Endothelial cell of umbilical vein (primary cell): ENCODE measurements at regions of chr10 and their contacts with region 1.

Region 1: DNA sequence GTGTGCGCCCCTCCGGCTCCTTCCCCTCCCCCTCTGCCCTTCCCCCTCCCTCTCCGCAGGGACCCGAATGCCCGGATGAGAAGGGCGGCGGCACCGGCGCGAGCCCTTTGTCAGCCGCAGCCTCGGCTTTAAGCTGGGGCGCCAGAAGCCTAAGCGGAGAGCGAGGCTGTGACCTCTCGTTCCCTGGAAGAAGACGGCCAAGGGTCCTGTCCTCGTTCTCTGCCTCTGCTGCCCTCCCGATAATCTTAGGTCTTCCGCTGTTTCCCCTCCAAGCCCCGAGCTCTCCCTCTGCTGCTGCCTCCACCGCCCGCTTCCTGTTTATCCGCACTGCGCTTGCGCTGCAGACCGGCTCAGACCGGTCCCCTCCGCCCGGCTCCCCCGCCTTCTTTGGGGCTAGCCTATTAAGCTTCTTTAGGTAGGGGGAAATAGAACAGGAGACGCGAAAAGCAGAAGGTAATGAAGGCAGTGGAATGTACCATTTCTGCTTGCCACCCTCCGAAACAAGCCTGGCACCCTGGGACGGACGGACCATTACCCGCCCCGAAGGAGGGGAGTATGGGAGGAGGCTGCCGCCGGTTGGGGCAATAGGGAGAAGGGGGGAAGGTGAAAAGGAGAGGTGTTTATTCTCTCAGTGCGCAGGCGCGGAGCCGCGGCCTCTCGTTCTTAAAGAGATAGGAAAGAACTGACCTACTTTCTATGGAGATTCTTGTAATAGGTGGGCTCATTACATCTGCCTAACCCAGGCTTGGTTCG is at the start of gene OGA:
- DNase-seq: peak; percentile 100
- H3K4me3 ChIP-seq: peak within 1 kb of the TSS; percentile 82 to 99 (median 90)
- H3K27ac ChIP-seq: peak within 1 kb of the TSS; percentile 83
- H3K4me1 ChIP-seq: peaks cover 19% of the 10 kb centered on the region
- H3K27me3 ChIP-seq: no peaks in the 10 kb centered on the region
- CTCF ChIP-seq: no peak
- POLR2A ChIP-seq: peak; percentile 87
- total RNA-seq, gene OGA: 113 and 118 TPM in 2 replicates

Region 2: GRCh38 chr10:102055647-102056419 is 237.5 kb after region 1 on chr10 and contains the start of gene ARMH3:
- CTCF ChIA-PET with region 1: interaction called, 4 read pairs
- POLR2A ChIA-PET with region 1: no interaction called
- dilution Hi-C with region 1: no loop called
- intact Hi-C with region 1: loop called (anchors 2 kb)
- DNase-seq: peak; percentile 97
- H3K4me3 ChIP-seq: peak within 1 kb of the TSS; percentile 30 to 90 (median 71)
- H3K27ac ChIP-seq: peak within 1 kb of the TSS; percentile 29
- H3K4me1 ChIP-seq: peaks cover 8% of the 10 kb centered on the region
- H3K27me3 ChIP-seq: no peaks in the 10 kb centered on the region
- CTCF ChIP-seq: no peak
- POLR2A ChIP-seq: peak; percentile 56
- total RNA-seq, gene ARMH3: 16.6 and 17.6 TPM in 2 replicates

Region 3: DNA sequence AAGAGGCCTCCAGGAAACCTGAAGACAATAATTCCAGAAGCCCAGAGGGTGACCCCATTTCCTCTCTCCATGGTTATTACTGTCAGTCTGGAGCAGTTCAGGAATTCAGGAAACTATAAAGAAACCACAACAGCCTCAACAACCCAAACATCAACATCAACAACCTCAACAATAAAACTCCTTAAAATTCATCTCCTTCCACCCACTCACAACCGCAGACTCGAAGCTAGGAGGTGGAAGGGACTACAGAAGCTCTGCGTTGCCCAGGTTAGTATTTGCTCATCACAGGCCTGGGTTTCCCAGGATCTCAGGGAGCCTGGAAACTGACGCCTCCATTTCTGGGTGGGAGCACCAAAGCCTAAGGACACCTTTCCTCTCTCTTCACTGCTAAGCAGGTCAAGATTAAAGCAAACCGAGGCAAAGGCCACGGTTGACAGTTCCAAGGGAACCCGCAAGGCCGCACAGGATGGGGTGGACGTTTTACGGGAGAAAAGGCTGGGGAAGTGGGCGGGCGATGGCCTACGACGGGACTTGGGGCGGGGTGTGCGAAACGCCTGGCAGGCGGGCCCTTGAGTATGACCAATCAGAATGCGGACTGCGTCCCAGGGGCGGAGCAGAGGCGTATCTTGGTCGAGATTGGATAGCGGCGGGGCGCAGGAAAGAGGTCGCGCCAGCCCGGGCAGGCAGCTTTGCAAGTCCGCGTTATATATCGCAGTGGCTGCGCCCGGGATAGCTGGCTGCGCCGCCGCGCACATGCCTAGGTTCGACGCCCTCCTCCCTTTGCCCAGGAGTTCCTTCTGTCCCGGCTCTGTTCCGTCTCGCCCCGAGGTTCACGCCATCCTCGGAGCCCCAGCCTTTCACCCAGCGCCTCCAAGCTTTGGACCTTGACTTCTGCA is 407.6 kb after region 1 on chr10 and contains the start of gene ELOVL3:
- CTCF ChIA-PET with region 1: no interaction called
- POLR2A ChIA-PET with region 1: no interaction called
- dilution Hi-C with region 1: no loop called
- intact Hi-C with region 1: no loop called
- DNase-seq: peak; percentile 97
- H3K4me3 ChIP-seq: no peak within 1 kb of the TSS
- H3K27ac ChIP-seq: no peak within 1 kb of the TSS
- H3K4me1 ChIP-seq: peaks cover 12% of the 10 kb centered on the region
- H3K27me3 ChIP-seq: peaks cover 54 to 59% of the 10 kb centered on the region in 2 experiments
- CTCF ChIP-seq: no peak
- POLR2A ChIP-seq: no peak
- total RNA-seq, gene ELOVL3: not detected in 2 replicates